Mammary epithelial cell (primary cell): ENCODE measurements at regions of chr15 and their contacts with region 1.

Region 1: GRCh38 chr15:81256916-81257315 is 60.2 kb downstream of the IL16 start:
- DNase-seq: peak; percentile 34
- H3K4me3 ChIP-seq: no peak overlapping the region
- H3K27ac ChIP-seq: no peak overlapping the region
- H3K4me1 ChIP-seq: peaks cover 10% of the 10 kb centered on the region
- H3K27me3 ChIP-seq: no peaks in the 10 kb centered on the region
- CTCF ChIP-seq: peak; percentile 36 to 68

Region 2: GRCh38 chr15:81106560-81106959 is 150.4 kb before region 1 on chr15:
- CTCF ChIA-PET with region 1: no interaction called
- dilution Hi-C with region 1: no loop called
- in situ Hi-C with region 1: no loop called
- intact Hi-C with region 1: loop called (anchors 1 kb)
- DNase-seq: peak; percentile 67
- H3K4me3 ChIP-seq: no peak overlapping the region
- H3K27ac ChIP-seq: no peak overlapping the region
- H3K4me1 ChIP-seq: peaks cover 11% of the 10 kb centered on the region
- H3K27me3 ChIP-seq: no peaks in the 10 kb centered on the region
- CTCF ChIP-seq: peak; percentile 79 to 82

Region 3: GRCh38 chr15:81111510-81112470 is 145.1 kb before region 1 on chr15:
- CTCF ChIA-PET with region 1: no interaction called
- dilution Hi-C with region 1: no loop called
- in situ Hi-C with region 1: no loop called
- intact Hi-C with region 1: loop called (anchors 1 kb)
- DNase-seq: peak; percentile 79
- H3K4me3 ChIP-seq: no peak overlapping the region
- H3K27ac ChIP-seq: peak overlapping the region; percentile 88
- H3K4me1 ChIP-seq: peaks cover 33% of the 10 kb centered on the region
- H3K27me3 ChIP-seq: no peaks in the 10 kb centered on the region
- CTCF ChIP-seq: no peak